ENCODE measurements at regions of chr7 and their contacts with region 1.

Region 1: DNA sequence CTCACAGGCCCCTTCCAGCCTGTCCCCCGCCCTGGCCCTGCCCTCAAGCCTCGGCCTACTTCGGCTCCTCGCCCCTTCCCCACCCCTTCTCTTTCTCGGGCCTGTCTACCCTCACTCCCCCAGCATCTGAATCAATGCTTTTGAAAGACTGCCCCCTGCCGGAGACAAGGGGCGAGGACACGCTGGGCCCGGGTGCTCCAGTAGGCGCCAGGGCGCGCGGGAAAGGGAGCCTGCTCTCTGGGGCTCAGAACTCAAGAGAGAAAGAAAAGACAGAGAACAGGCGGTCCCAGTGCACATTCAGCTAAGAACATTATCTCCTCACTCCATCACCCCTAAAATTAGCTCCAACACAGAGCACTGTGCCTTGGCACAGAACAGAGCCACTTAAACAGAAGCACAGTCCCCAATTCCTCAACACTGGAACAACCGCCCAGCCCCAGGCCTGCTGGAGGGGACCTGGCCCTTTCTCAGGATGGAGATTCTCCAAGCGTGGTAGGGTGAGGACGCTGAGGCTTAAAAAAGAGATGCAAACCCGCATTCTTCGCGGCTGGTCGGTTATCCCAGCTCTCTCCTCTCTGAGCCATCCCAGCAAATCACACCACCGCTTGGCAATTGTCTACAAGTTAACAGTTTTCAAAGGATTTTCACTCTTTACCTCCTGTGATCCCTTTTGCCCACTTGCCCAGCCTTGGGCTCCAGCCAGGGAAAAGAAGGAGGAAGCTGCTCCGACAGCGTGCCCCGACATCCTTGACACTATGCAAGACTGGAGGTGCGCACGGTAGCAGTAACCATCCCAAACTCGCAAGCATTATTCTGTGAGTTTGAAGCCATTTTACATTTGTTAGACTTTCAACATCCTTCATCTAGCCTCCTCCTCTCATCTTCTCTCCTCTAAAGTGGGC is 2.1 kb downstream of the GIGYF1 start:
- DNase-seq: peak; percentile 86
- ATAC-seq: peak; percentile 76
- H3K4me3 Mint-ChIP-seq: peak overlapping the region; percentile 96
- H3K27ac Mint-ChIP-seq: peak overlapping the region; percentile 71
- H3K4me1 Mint-ChIP-seq: peaks cover 28% of the 10 kb centered on the region
- H3K27me3 Mint-ChIP-seq: peaks cover 13% of the 10 kb centered on the region

Region 2: GRCh38 chr7:100503345-100503725 is 188.6 kb before region 1 on chr7:
- CTCF ChIA-PET with region 1: no interaction called
- DNase-seq: no peak
- ATAC-seq: no peak
- H3K4me3 Mint-ChIP-seq: no peak overlapping the region
- H3K27ac Mint-ChIP-seq: no peak overlapping the region
- H3K4me1 Mint-ChIP-seq: no peaks in the 10 kb centered on the region
- H3K27me3 Mint-ChIP-seq: peaks cover 2% of the 10 kb centered on the region

Region 3: DNA sequence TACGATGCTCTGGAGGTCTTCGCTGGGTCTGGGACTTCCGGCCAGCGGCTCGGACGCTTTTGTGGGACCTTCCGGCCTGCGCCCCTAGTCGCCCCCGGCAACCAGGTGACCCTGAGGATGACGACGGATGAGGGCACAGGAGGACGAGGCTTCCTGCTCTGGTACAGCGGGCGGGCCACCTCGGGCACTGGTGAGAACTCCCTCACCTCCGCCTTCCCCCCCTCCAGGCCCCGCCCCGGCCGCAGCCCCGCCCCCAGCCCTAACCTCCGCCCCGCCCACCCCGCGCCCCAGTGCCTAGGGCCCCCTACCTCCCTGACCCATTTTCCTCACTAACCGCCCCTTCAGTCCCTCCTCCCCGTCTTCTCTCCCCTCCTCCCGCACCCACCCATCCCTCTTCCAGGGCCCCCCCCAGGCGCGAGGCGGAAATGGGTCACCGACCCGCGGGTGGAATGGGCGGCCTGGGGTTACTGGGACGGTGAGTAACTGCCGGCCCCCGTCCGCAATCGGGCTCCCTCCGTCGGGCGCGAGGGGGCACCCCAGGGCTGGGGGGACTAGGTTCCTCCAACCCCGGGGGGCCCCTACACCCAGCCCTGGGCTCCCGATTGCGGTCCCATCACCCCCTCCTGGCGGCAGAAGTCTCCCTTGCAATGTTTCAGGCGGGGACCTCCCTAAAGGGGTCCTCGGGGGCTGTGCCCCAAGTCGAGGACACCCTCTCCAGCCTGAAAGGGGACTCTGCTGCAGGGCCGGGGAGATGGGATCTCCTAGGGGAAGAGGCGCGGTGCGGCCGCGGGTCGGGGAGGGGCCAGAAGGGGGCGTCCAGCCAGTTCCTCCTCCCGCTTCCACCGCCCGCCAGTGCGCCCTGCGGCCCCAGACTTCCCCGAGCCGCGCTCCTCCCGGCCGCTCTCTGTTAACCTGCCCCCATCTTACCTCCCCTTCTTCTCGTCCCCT is 87.6 kb before region 1 on chr7:
- CTCF ChIA-PET with region 1: interaction called, 41 read pairs
- DNase-seq: peak; percentile 91
- ATAC-seq: peak; percentile 78
- H3K4me3 Mint-ChIP-seq: peak overlapping the region; percentile 86
- H3K27ac Mint-ChIP-seq: peak overlapping the region; percentile 93
- H3K4me1 Mint-ChIP-seq: peaks cover 23% of the 10 kb centered on the region
- H3K27me3 Mint-ChIP-seq: peaks cover 5% of the 10 kb centered on the region

Region 4: DNA sequence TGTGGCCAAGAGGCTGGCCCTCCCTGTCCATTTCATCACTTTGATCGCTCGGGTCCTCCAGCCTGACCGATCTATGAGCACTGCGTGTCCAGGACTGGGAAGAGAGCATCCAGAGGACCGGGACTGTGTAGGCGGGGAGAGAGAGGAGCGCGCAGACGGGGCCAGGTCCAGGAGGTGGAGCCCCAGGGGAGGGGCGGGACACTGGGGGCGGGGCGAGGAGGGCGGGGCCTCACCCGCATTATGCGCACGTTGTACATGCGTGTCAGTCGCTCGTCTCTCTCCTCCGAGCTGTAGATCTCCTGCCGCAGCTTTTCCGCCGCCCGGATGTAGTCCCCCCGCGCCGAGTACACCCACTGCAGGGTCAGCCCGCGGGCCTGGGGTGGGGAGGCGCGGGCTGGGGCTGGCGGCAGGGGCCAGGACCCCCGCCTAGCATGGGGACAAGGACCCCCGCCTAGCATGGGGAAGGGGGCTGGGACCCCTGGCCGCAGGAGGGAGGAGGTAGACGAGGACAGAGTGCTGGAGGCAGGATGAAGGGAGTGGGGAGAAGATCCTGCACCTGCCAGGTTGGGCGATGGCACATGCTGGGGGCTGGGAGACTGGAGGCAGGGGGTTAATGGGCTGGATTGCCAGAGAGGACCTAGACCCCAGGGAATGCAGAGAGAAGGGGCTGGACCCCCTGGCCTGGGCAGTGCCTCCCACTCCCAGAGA is 65.2 kb before region 1 on chr7:
- CTCF ChIA-PET with region 1: interaction called, 77 read pairs
- DNase-seq: peak; percentile 96
- ATAC-seq: peak; percentile 96
- H3K4me3 Mint-ChIP-seq: peak overlapping the region; percentile 69
- H3K27ac Mint-ChIP-seq: peak overlapping the region; percentile 81
- H3K4me1 Mint-ChIP-seq: peaks cover 50% of the 10 kb centered on the region
- H3K27me3 Mint-ChIP-seq: no peaks in the 10 kb centered on the region

Region 5: GRCh38 chr7:100673300-100673941 is 18.5 kb before region 1 on chr7 and contains the start of gene GNB2:
- CTCF ChIA-PET with region 1: interaction called, 91 read pairs
- DNase-seq: peak; percentile 99
- ATAC-seq: peak; percentile 75
- H3K4me3 Mint-ChIP-seq: peak within 1 kb of the TSS; percentile 93
- H3K27ac Mint-ChIP-seq: peak within 1 kb of the TSS; percentile 92
- H3K4me1 Mint-ChIP-seq: peaks cover 18% of the 10 kb centered on the region
- H3K27me3 Mint-ChIP-seq: peaks cover 2% of the 10 kb centered on the region
- total RNA-seq, gene GNB2: 243 to 271 TPM

Region 6: GRCh38 chr7:100736671-100737070 is 44.7 kb after region 1 on chr7:
- CTCF ChIA-PET with region 1: no interaction called
- DNase-seq: no peak
- ATAC-seq: no peak
- H3K4me3 Mint-ChIP-seq: no peak overlapping the region
- H3K27ac Mint-ChIP-seq: no peak overlapping the region
- H3K4me1 Mint-ChIP-seq: no peaks in the 10 kb centered on the region
- H3K27me3 Mint-ChIP-seq: peaks cover 5% of the 10 kb centered on the region